Motor neuron (in vitro differentiated cells): ENCODE measurements at regions of chr1 and their contacts with region 1.

Region 1: GRCh38 chr1:221741711-221742554 is at the start of gene DUSP10:
- ATAC-seq: peak; percentile 70 to 89 (median 86)
- H3K4me3 ChIP-seq: peak within 1 kb of the TSS; percentile 38 to 55 (median 52)
- H3K27ac ChIP-seq: peak within 1 kb of the TSS; percentile 36 to 82
- H3K4me1 ChIP-seq: peaks cover 4 to 10% of the 10 kb centered on the region in 2 donors
- total RNA-seq, gene DUSP10: 0.91 to 20.7 (median 10.3) TPM

Region 2: GRCh38 chr1:221557013-221557412 is 184.9 kb before region 1 on chr1:
- in situ Hi-C with region 1: loop called in 1 of 9 experiments (anchors 10 kb)
- ATAC-seq: peak in 1 of 8 experiments; percentile 46
- H3K4me3 ChIP-seq: no peak overlapping the region
- H3K27ac ChIP-seq: no peak overlapping the region
- H3K4me1 ChIP-seq: no peaks in the 10 kb centered on the region

Region 3: GRCh38 chr1:222171005-222171404 is 429.1 kb after region 1 on chr1:
- in situ Hi-C with region 1: loop called in 1 of 9 experiments (anchors 25 kb)
- ATAC-seq: peak in 6 of 8 experiments; percentile 50 to 80 (median 62)
- H3K4me3 ChIP-seq: no peak overlapping the region
- H3K27ac ChIP-seq: no peak overlapping the region
- H3K4me1 ChIP-seq: no peaks in the 10 kb centered on the region

Region 4: DNA sequence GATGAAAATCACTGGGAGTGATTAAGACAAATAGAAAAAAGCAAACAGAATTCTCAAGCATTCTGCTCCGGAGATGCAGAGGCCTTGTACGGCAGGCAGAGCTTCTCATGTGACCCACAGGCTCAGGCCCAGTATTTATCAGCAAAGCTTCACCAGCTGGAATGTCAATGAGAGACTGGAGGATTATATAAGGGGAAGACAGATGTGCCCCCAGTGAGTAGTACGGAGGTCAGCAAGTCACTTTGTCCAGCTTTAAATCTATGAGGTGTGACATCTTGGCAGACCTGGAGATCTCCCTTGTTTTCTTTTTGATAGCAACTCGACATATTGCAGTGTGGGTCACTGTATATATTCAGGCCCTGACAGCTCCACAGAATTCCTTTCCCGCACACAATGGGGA is 699.1 kb after region 1 on chr1:
- in situ Hi-C with region 1: loop called in 2 of 9 experiments (anchors 25 kb)
- ATAC-seq: peak in 5 of 8 experiments; percentile 93 to 97 (median 96)
- H3K4me3 ChIP-seq: no peak overlapping the region
- H3K27ac ChIP-seq: peak overlapping the region; percentile 14 to 74
- H3K4me1 ChIP-seq: peaks cover 38 to 43% of the 10 kb centered on the region in 2 donors